ENCODE measurements at regions of chr15 and their contacts with region 1.

Region 1: GRCh38 chr15:34241372-34242330 is 16.8 kb downstream of the EMC4 start:
- DNase-seq: peak; percentile 53
- ATAC-seq: peak; percentile 84
- H3K4me3 Mint-ChIP-seq: no peak overlapping the region
- H3K27ac Mint-ChIP-seq: peak overlapping the region; percentile 23
- H3K4me1 Mint-ChIP-seq: peaks cover 32% of the 10 kb centered on the region
- H3K27me3 Mint-ChIP-seq: no peaks in the 10 kb centered on the region
- CTCF ChIP-seq: peak; percentile 83

Region 2: GRCh38 chr15:33915571-33916407 is 325.9 kb before region 1 on chr15:
- CTCF ChIA-PET with region 1: no interaction called
- POLR2A ChIA-PET with region 1: no interaction called
- intact Hi-C with region 1: no loop called
- DNase-seq: no peak
- ATAC-seq: no peak
- H3K4me3 Mint-ChIP-seq: no peak overlapping the region
- H3K27ac Mint-ChIP-seq: no peak overlapping the region
- H3K4me1 Mint-ChIP-seq: peaks cover 5% of the 10 kb centered on the region
- H3K27me3 Mint-ChIP-seq: no peaks in the 10 kb centered on the region
- CTCF ChIP-seq: no peak

Region 3: GRCh38 chr15:34259566-34259965 is 17.9 kb after region 1 on chr15:
- CTCF ChIA-PET with region 1: interaction called, 24 read pairs
- POLR2A ChIA-PET with region 1: interaction called, 4 read pairs
- intact Hi-C with region 1: no loop called
- DNase-seq: no peak
- ATAC-seq: no peak
- H3K4me3 Mint-ChIP-seq: no peak overlapping the region
- H3K27ac Mint-ChIP-seq: no peak overlapping the region
- H3K4me1 Mint-ChIP-seq: peaks cover 6% of the 10 kb centered on the region
- H3K27me3 Mint-ChIP-seq: no peaks in the 10 kb centered on the region
- CTCF ChIP-seq: no peak

Region 4: GRCh38 chr15:34318277-34319079 is 76.8 kb after region 1 on chr15:
- CTCF ChIA-PET with region 1: interaction called, 10 read pairs
- POLR2A ChIA-PET with region 1: no interaction called
- intact Hi-C with region 1: no loop called
- DNase-seq: peak; percentile 51
- ATAC-seq: peak; percentile 76
- H3K4me3 Mint-ChIP-seq: peak overlapping the region; percentile 86
- H3K27ac Mint-ChIP-seq: peak overlapping the region; percentile 91
- H3K4me1 Mint-ChIP-seq: peaks cover 50% of the 10 kb centered on the region
- H3K27me3 Mint-ChIP-seq: no peaks in the 10 kb centered on the region
- CTCF ChIP-seq: no peak

Region 5: DNA sequence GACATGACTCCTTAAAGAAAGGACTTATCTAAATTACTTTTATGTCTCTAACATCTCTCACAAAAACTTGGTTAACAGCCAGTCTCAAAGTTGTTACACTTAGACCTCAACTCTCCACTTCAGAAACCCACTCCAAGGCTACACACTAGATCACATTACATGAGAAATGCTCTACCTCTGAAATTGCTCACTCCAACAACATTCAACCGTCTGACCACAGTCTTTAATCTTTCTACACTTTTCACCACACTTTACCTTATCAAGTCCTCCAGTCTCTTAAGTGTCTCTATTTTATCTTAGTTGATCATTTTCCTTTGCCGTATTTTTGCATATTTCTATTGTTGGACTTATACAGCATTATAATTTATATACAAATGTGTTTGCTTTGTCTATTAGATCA is 90.2 kb after region 1 on chr15:
- CTCF ChIA-PET with region 1: interaction called, 32 read pairs
- POLR2A ChIA-PET with region 1: no interaction called
- intact Hi-C with region 1: loop called (anchors 5 kb)
- DNase-seq: no peak
- ATAC-seq: peak; percentile 65
- H3K4me3 Mint-ChIP-seq: peak overlapping the region; percentile 52
- H3K27ac Mint-ChIP-seq: peak overlapping the region; percentile 95
- H3K4me1 Mint-ChIP-seq: peaks cover 72% of the 10 kb centered on the region
- H3K27me3 Mint-ChIP-seq: no peaks in the 10 kb centered on the region
- CTCF ChIP-seq: no peak

Region 6: GRCh38 chr15:34337557-34338306 is 96.1 kb after region 1 on chr15 and contains the start of gene SLC12A6:
- CTCF ChIA-PET with region 1: interaction called, 22 read pairs
- POLR2A ChIA-PET with region 1: no interaction called
- intact Hi-C with region 1: no loop called
- DNase-seq: peak; percentile 91
- ATAC-seq: peak; percentile 85
- H3K4me3 Mint-ChIP-seq: peak within 1 kb of the TSS; percentile 99
- H3K27ac Mint-ChIP-seq: peak within 1 kb of the TSS; percentile 95
- H3K4me1 Mint-ChIP-seq: peaks cover 49% of the 10 kb centered on the region
- H3K27me3 Mint-ChIP-seq: no peaks in the 10 kb centered on the region
- CTCF ChIP-seq: no peak
- total RNA-seq, gene SLC12A6: 22.2 to 24.8 TPM

Region 7: DNA sequence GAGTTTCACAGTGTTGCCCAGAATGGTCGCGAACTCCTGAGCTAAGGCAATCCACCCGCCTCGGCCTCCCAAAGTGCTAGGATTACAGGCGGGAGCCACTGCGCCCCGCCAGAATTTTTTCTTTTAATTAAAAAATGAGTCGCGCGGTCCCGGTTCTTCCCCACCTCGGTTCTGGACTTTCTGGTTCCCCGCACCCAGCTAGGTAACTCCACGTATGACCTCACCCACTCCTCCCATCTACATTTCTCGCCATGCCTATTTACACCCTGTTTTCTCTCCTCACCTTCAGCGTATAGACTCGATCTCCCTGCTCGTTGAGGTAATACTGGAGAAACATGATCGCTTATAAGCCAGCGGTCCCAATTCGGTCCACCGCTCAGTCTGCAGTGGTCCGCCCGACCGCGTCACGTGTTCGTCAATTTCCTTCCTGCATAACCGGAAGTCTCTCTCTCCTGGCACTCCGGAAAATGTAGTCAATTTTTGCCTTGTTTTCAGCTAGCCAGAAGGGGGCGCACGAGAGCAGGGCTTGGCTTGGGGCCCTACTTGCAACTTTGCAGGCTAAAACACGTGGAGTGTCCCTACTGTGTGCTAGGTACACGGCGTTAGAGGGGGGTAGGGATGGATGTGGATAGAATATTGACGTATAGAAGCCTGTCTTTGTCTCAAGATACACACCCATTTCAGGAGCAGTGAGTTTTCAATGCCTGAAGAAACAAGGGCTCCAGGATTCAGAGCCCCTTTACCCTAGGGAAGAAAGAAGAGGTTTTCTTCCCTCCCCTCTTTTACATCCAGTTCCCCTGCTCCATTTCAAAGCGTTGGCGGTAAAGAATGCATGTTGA is 101.3 kb after region 1 on chr15 and contains the starts of genes NOP10 and NUTM1:
- CTCF ChIA-PET with region 1: interaction called, 22 read pairs
- POLR2A ChIA-PET with region 1: no interaction called
- intact Hi-C with region 1: no loop called
- DNase-seq: peak; percentile 94
- ATAC-seq: peak; percentile 90
- H3K4me3 Mint-ChIP-seq: no peak within 1 kb of the TSS
- H3K27ac Mint-ChIP-seq: peak within 1 kb of the TSS; percentile 82
- H3K4me1 Mint-ChIP-seq: peaks cover 25% of the 10 kb centered on the region
- H3K27me3 Mint-ChIP-seq: no peaks in the 10 kb centered on the region
- CTCF ChIP-seq: peak; percentile 91
- total RNA-seq, gene NOP10: 225 to 226 TPM
- total RNA-seq, gene NUTM1: not detected

Measured in activated CD8-positive, alpha-beta T cell treated with anti-CD3 and anti-CD28 coated beads for 36 hours (primary cell).